Naive thymus-derived CD4-positive, alpha-beta T cell (primary cell): ENCODE measurements at regions of chr22 and their contacts with region 1.

Region 1: GRCh38 chr22:24555157-24556039 is at the start of gene SNRPD3:
- DNase-seq: peak; percentile 89 to 99 (median 96)
- ATAC-seq: peak; percentile 92
- H3K4me3 ChIP-seq: peak within 1 kb of the TSS; percentile 98
- H3K4me3 Mint-ChIP-seq: peak within 1 kb of the TSS; percentile 90 to 100 (median 98)
- H3K27ac ChIP-seq: peak within 1 kb of the TSS; percentile 92
- H3K27ac Mint-ChIP-seq: peak within 1 kb of the TSS; percentile 93 to 100 (median 98)
- H3K4me1 ChIP-seq: peaks cover 20 to 38% of the 10 kb centered on the region in 2 donors
- H3K4me1 Mint-ChIP-seq: peaks cover 39 to 80% (median 70%) of the 10 kb centered on the region in 7 donors
- H3K27me3 ChIP-seq: no peaks in the 10 kb centered on the region
- H3K27me3 Mint-ChIP-seq: no peaks in the 10 kb centered on the region
- total RNA-seq, gene SNRPD3: 47.5 to 94.5 (median 73.9) TPM

Region 2: GRCh38 chr22:23786752-23787599 is 768.4 kb before region 1 on chr22 and contains the start of gene SMARCB1:
- CTCF ChIA-PET with region 1: no interaction called
- POLR2A ChIA-PET with region 1: no interaction called
- intact Hi-C with region 1: loop called in 1 of 2 experiments (anchors 1 kb)
- DNase-seq: peak; percentile 80 to 90 (median 87)
- ATAC-seq: peak; percentile 94
- H3K4me3 ChIP-seq: peak within 1 kb of the TSS; percentile 85
- H3K4me3 Mint-ChIP-seq: peak within 1 kb of the TSS; percentile 81 to 94 (median 91)
- H3K27ac ChIP-seq: peak within 1 kb of the TSS; percentile 99
- H3K27ac Mint-ChIP-seq: peak within 1 kb of the TSS; percentile 89 to 98 (median 96)
- H3K4me1 ChIP-seq: peaks cover 11 to 17% of the 10 kb centered on the region in 2 donors
- H3K4me1 Mint-ChIP-seq: peaks cover 13 to 54% (median 41%) of the 10 kb centered on the region in 7 donors
- H3K27me3 ChIP-seq: no peaks in the 10 kb centered on the region
- H3K27me3 Mint-ChIP-seq: no peaks in the 10 kb centered on the region
- total RNA-seq, gene SMARCB1: 47.1 to 81.1 (median 54.2) TPM

Region 3: DNA sequence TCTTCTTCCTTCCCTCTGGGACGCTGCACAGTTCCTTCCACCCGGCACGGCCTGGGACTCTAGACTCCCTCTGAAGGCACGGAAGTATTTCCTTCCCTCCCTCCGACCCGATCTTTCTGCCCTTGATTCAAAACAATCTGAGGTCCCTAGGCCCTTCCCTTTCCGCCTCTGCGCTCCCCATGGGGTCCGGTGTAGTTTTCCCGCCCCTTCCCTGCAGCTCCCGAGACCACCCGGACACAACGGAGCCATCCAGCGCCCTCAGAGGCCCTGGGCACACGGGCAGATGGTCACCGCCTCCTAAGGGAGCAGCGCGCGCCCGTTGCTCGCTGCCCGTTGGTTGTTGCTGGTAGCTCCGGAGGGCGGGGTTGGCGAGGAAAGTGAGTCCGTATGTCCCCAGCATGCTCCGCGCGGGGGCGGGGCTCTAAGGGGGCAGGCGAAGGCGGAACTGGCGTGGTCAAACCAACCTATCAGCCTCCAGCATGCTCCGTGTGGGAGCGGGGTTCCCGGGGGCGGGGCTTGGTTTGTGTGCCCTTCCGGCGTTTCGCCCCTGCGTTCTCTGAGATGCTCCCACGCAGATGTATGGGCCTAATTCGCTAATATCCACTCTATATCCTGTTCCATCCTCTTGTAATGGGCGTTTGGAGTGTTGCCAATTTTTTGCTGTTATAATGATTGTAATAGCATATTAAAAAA is 641.6 kb before region 1 on chr22:
- CTCF ChIA-PET with region 1: no interaction called
- POLR2A ChIA-PET with region 1: no interaction called
- intact Hi-C with region 1: loop called in 1 of 2 experiments (anchors 1 kb)
- DNase-seq: peak; percentile 94 to 100 (median 97)
- ATAC-seq: peak; percentile 100
- H3K4me3 ChIP-seq: peak overlapping the region; percentile 83
- H3K4me3 Mint-ChIP-seq: peak overlapping the region; percentile 84 to 97 (median 93)
- H3K27ac ChIP-seq: peak overlapping the region; percentile 78
- H3K27ac Mint-ChIP-seq: peak overlapping the region; percentile 89 to 99 (median 98)
- H3K4me1 ChIP-seq: peaks cover 0 to 7% of the 10 kb centered on the region in 2 donors
- H3K4me1 Mint-ChIP-seq: peaks cover 7 to 34% (median 16%) of the 10 kb centered on the region in 7 donors
- H3K27me3 ChIP-seq: no peaks in the 10 kb centered on the region
- H3K27me3 Mint-ChIP-seq: peaks cover 0 to under 1% (median 0%) of the 10 kb centered on the region in 5 donors

Region 4: DNA sequence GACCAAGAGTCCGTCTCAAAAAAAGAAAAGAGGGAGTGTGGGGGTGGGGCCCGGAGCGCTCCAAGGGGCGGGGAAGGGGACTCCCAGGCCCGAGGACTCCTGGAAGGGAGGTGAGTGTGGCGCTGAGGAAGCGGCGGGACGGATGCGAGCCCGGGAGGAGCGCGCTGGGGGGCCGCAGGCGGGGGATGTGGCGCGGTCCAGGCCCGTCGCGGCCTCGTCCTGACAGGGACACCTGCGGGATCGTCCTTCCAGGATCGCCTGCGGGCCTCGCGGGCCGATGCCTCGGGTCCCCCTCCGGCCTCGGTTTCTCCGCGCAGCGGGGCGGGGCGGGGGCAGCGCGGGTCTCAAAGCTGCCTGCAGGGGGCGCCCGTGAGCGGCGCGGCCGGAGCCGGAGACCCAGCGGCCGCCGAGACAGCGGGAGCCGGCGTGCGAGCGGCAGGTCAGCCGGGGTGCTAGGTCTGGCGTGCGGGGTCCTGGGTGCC is 131.8 kb before region 1 on chr22:
- CTCF ChIA-PET with region 1: interaction called, 3 read pairs
- POLR2A ChIA-PET with region 1: interaction called, 12 read pairs
- intact Hi-C with region 1: loop called in 1 of 2 experiments (anchors 1 kb)
- DNase-seq: peak in 8 of 9 donors; percentile 35 to 87 (median 58)
- ATAC-seq: peak; percentile 52
- H3K4me3 ChIP-seq: no peak overlapping the region
- H3K4me3 Mint-ChIP-seq: peak overlapping the region; percentile 49 to 90 (median 62)
- H3K27ac ChIP-seq: peak overlapping the region; percentile 56
- H3K27ac Mint-ChIP-seq: peak overlapping the region in 5 of 9 donors; percentile 43 to 86 (median 74)
- H3K4me1 ChIP-seq: peaks cover 19 to 29% of the 10 kb centered on the region in 2 donors
- H3K4me1 Mint-ChIP-seq: peaks cover 28 to 39% (median 37%) of the 10 kb centered on the region in 7 donors
- H3K27me3 ChIP-seq: no peaks in the 10 kb centered on the region
- H3K27me3 Mint-ChIP-seq: peaks cover 0 to 5% (median 0%) of the 10 kb centered on the region in 5 donors

Region 5: GRCh38 chr22:24805790-24806662 is 250.6 kb after region 1 on chr22 and contains the start of gene SGSM1:
- CTCF ChIA-PET with region 1: no interaction called
- POLR2A ChIA-PET with region 1: no interaction called
- intact Hi-C with region 1: loop called in 1 of 2 experiments (anchors 1 kb)
- DNase-seq: peak; percentile 40 to 83 (median 74)
- ATAC-seq: peak; percentile 92
- H3K4me3 ChIP-seq: peak within 1 kb of the TSS; percentile 65
- H3K4me3 Mint-ChIP-seq: peak within 1 kb of the TSS; percentile 52 to 82 (median 76)
- H3K27ac ChIP-seq: peak within 1 kb of the TSS; percentile 57
- H3K27ac Mint-ChIP-seq: peak within 1 kb of the TSS; percentile 6 to 85 (median 28)
- H3K4me1 ChIP-seq: no peaks in the 10 kb centered on the region
- H3K4me1 Mint-ChIP-seq: peaks cover 6 to 26% (median 7%) of the 10 kb centered on the region in 7 donors
- H3K27me3 ChIP-seq: no peaks in the 10 kb centered on the region
- H3K27me3 Mint-ChIP-seq: peaks cover 0 to 12% (median 0%) of the 10 kb centered on the region in 5 donors
- total RNA-seq, gene SGSM1: 0.29 to 3.3 (median 2.9) TPM